ENCODE measurements at regions of chr9 and their contacts with region 1.

Region 1: DNA sequence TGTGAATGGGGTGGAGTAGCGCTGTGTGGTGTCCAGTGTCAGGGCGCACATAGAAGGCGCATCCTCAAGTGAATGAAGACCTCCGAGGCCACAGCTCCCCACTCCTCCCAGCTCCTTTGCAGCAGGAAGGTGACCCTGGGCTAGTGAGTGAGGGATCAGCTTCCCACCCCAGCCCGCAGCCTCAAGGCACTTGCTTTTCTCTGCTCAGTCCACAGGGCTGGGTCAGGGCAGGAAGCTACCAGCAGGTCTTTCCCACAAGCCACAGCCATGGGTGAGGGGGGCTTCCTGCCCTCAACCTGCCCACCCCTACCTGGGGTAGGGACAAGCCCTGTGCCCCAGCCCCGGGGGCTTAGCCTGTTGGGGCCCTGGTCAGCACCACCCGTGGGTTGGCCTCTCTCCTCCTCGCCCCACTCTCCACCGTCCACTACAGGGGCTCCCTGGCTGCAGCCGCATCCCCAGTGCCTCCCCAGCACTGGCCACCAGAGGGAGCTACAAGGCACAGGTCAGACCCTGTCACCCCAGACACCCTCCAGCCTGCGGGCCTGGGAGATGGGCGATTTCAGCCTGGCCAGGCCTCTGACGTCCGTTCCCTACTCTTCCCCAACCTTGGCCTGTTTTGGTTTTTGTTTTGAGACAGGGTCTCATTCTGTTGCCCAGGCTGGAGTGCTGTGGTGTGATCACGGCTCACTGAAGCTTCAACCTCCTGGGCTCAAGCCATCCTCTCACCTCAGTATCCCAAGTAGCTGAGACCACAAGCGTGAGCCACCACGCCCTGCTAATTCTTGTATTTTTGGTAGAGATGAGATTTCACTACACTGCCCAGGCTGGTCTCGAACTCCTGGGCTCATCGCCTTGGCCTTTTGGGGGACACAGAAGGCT is 1.3 kb upstream of the ABCA2 start:
- DNase-seq: peak; percentile 78
- H3K27ac ChIP-seq: peak overlapping the region; percentile 81
- CTCF ChIP-seq: peak; percentile 99

Region 2: DNA sequence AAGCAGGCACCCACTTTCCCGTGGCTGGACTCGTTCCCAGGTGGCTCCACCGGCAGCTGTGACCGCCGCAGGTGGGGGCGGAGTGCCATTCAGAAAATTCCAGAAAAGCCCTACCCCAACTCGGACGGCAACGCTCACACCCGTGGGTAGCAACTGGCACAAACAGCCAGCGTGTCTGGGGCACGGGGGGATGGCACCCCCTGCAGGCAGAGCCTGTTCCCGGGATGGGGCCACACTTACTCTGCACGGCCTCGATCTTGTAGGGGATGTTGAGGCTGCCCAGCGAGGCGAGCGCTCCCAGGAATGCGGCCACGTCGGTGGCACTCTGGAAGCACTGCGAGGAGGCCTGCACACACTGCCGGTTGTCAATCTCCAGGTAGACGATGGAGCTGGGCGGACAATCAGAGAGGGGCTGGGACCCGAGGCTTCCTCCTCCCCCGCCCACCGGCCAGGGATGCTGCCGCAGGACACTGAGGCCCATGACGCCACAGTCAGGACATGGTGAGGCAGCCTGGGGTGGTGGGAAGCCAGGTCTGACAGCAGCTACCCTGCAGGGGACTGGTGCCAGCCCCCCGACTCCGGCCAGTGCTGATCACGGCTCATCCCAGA is 526.3 kb before region 1 on chr9:
- CTCF ChIA-PET with region 1: no interaction called
- POLR2A ChIA-PET with region 1: no interaction called
- DNase-seq: no peak
- H3K27ac ChIP-seq: peak overlapping the region; percentile 37
- CTCF ChIP-seq: 0 out of 2 replicates have a peak, but pooled peaks have one; percentile 9

Region 3: DNA sequence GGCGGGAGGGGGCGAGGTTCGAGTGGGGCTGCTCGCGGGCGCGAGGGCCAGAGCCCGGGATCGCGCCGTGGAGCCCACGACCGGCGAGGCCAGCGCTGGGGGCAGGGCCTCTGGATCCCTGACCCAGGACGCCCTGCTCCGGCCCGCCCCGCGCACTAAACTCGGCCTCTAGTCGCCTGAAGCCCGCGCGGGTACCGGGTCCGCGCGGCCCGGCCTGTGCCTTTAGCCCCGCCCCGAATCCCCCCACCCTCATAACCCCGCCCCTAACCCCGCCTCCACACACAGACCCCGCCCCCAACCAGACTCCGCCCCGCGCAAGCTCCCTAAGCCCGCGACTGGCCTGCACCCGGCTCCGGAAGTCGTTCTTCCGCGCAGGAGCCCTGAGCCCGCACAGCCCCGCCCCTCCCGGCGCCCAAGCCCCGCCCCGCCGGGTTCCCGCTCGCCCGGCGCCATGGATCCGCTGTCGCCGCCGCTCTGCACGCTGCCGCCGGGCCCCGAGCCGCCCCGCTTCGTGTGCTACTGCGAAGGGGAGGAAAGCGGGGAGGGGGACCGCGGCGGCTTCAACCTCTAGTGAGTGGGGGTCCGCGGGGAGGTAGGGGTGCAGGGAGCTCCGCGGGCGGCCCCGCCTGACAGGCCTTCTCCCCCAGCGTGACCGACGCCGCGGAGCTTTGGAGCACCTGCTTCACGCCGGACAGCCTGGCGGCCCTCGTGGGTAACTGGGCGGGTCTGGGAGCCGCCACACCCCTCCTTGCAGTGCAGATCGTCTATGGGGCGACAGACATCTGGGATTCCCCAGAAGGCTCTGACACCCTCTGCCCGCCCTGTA is 37.1 kb before region 1 on chr9 and contains the start of gene PAXX:
- CTCF ChIA-PET with region 1: interaction called, 19 read pairs
- POLR2A ChIA-PET with region 1: interaction called, 5 read pairs
- DNase-seq: peak; percentile 99
- H3K27ac ChIP-seq: peak within 1 kb of the TSS; percentile 93
- CTCF ChIP-seq: no peak

Region 4: DNA sequence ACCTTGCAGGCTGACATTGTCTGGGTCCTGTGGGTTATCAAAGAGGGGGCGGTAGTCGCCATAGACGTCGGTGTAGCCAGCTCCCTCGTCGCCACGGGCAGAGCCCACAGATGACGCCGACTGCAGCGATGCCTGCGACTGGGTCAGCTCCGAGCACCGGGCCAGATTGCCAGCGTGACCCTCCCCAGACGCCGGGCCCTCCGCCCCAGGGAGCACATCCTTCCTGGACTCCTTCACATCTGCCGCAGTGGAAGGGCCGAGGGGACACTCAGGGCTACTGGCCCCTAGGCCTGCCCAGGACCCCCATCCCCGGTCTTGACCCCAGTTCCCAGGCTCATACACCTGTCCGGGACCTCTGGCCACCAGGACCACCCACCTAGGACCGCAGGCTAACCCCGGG is 15.1 kb before region 1 on chr9:
- CTCF ChIA-PET with region 1: interaction called, 36 read pairs
- POLR2A ChIA-PET with region 1: no interaction called
- DNase-seq: no peak
- H3K27ac ChIP-seq: no peak overlapping the region
- CTCF ChIP-seq: no peak

Region 5: GRCh38 chr9:137046098-137046787 is 16.9 kb after region 1 on chr9 and contains the start of gene NPDC1:
- CTCF ChIA-PET with region 1: interaction called, 63 read pairs
- POLR2A ChIA-PET with region 1: no interaction called
- DNase-seq: peak; percentile 95
- H3K27ac ChIP-seq: peak within 1 kb of the TSS; percentile 48
- CTCF ChIP-seq: peak; percentile 99

Region 6: GRCh38 chr9:137070201-137070905 is 41.1 kb after region 1 on chr9 and contains the start of gene SAPCD2:
- CTCF ChIA-PET with region 1: interaction called, 31 read pairs
- POLR2A ChIA-PET with region 1: no interaction called
- DNase-seq: peak; percentile 96
- H3K27ac ChIP-seq: peak within 1 kb of the TSS; percentile 85
- CTCF ChIP-seq: no peak

Measured in RWPE1 (cell line).